ENCODE measurements at regions of chr15 and their contacts with region 1.

Region 1: GRCh38 chr15:85955501-85956391 is 123.9 kb upstream of the AGBL1 start:
- DNase-seq: no peak
- H3K4me3 ChIP-seq: no peak overlapping the region
- H3K27ac ChIP-seq: no peak overlapping the region
- H3K4me1 ChIP-seq: no peaks in the 10 kb centered on the region
- H3K27me3 ChIP-seq: peaks cover 0 to 7% of the 10 kb centered on the region in 2 donors
- CTCF ChIP-seq: no peak
- POLR2A ChIP-seq: no peak

Region 2: DNA sequence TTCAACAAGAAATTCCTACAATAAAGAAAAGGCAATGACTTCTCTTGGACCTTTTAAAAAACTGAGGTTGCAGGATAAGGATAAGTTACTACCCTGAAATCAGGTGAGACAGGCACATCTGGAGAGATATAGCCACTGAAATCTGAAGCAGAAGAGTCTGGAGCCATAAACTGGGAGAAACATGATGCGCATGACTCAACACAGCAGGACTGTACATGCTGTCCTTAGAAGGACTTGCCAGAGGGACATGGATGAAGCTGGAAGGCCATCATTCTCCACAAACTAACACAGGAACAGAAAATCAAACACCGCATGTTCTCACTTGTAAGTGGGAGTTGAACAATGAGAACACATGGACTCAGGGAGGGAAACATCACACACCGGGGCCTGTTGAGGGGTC is 1144.2 kb after region 1 on chr15:
- intact Hi-C with region 1: loop called (anchors 10 kb)
- DNase-seq: no peak
- H3K4me3 ChIP-seq: no peak overlapping the region
- H3K27ac ChIP-seq: no peak overlapping the region
- H3K4me1 ChIP-seq: no peaks in the 10 kb centered on the region
- H3K27me3 ChIP-seq: no peaks in the 10 kb centered on the region
- CTCF ChIP-seq: no peak
- POLR2A ChIP-seq: no peak

Measured in breast epithelium (tissue), 4 donors.